HEK293T (cell line): ENCODE measurements at regions of chr6 and their contacts with region 1.

Region 1: DNA sequence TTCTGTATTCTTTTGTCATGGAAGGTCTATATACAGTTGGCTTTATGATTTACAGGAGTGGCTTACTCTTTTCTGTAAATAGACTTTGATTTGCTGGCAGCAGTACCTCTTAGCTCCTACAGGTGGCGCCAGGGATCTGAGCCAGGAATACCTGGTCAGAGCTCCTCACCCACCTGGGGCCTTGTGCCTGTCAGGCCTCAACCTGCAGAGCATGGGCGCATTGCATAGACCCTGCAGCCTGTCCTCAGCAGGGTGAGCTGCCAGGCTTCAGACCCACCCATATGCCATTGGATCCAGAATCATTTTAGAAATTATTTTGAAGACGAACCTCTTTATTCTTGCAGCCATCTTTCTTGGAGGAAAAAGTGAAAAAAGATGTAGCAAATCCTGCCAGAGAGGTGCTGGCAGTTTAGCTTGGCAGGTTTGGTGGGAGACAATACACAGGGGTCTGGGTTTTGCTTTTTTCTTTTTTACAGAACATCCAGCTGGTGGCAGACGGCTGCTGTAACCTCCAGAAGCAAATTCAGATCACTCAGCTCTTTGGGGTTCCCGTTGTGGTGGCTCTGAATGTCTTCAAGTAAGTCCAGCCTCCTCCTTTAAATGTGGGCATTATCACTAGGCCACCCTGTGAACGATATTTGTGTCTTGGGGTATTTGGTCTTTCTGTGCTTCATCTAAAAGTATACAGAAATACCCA is 149.1 kb downstream of the MTHFD1L start:
- DNase-seq: peak; percentile 77

Region 2: DNA sequence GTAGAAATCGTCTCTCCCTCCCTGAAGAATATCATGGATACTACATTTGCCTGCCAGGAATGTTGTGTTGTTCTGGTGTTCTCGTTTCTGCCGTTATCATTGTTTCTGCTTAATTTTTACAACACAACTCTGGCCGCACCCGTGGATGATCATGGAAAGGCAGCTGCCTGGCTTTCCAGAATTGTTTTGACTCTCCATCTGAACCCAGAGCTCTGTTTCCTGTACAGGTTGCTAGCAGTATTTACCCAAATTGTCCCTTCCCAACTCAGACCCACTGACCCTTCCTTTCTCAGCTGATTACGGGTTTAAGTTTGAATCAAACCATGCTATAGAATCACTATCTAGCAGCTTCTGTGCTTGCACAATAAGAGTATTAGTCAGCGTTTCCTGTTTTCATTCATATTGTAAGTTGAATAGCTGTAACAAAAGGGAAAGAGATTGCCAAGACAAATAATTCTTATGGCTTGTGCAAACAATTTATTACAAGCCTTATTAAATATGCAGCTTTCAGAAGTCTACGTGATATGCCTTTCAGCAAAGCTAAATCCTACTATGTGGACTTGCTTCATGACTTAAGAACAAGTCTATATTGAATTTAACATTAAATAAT is 10.0 kb before region 1 on chr6:
- CTCF ChIA-PET with region 1: interaction called, 14 read pairs
- POLR2A ChIA-PET with region 1: no interaction called
- DNase-seq: no peak

Region 3: DNA sequence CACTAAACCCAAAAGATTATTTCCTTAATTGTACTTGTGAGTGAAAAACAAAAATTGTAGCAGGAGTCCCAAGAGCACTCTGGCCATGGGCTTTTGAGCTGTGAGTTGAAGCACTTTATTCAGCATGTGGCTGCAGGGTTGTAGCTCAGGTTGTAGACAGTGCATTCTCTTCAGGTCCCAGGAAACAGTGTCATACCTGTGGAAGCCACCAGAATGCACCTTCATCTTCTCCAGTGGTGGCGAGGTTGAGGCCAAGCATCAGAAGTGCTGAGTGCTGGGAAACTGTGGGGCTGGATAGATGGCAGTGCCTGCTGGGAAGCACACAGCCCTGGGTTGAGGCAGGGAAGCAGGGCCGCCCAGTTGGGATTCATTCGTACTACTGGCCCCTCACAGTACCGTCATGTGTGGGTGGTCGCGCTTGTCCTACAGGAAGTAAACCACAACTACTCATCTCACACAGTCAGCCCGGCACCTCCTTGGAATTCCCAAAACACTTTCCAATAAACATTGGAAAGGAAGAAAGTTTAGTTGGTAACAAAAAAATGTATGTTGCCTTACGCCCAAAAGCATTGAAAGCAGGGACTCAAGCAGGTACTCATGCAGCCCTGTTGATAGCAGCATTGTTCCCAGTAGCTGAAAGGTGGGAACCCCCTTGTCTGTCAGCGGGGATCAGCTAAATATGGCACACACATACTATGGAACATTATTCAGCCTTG is 13.4 kb after region 1 on chr6:
- CTCF ChIA-PET with region 1: interaction called, 11 read pairs
- POLR2A ChIA-PET with region 1: no interaction called
- DNase-seq: no peak

Region 4: DNA sequence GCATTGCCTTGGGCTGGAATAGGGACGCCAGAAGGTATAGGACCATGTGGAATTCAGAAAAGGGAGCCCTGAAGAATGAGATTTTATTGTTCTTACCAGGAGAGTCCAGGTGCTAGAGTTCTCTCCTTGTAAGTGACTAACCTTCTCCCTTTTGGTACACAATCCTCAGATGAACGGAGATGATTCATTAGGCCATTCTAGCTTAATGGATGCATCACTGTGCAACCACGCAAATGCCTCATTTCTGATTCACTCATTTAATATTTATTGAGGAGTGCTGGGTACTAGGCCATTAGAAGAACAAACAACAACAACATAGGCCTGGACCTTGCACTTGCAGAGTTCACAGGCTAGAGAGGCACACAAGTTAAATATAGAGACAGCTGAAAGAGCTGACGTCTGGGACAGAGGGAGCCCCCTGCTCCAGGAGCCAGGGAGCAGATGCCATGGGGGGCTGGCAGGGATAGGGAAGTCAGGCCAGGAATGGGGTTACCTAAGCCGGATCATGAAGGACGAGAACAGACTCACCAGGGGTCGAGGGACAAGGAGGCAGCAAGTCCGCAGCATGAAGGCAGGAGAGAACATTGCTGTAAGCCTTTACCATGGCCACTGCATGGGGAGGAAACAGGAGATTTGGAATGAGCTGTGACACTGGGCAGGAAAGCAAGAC is 45.7 kb after region 1 on chr6:
- CTCF ChIA-PET with region 1: no interaction called
- POLR2A ChIA-PET with region 1: no interaction called
- DNase-seq: no peak

Region 5: DNA sequence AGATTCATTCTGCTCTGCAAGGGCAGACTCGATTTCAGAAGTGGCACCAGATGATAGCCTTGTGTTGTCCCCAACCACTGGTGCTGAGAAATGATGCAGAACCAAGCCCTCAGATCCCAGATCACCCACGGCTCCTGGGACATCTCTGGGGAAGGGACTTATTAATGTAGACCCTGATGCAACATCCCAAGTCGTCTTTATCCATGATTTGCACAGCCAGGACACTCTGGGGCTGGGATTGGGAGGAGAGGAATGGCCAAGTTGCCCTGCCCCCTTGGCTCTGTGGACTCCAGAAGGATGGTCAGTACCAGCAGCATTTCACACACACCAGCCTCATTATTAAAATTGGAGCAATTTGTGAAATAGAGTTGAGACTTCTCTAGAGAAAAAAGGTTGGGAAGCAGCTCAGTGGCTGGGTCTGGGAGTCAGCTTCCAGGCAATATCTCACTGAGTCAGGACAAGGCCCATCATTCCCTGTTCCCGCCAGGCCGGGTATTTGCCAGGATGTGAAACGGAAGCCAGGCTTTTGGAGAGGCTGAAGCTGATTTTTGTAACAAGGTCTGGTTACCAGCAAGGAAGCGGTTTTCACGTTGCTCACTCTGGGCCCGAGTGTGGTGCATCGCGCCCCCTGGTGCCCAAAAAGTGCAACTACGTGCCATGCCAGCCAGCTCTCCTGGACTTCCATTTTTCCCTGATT is 309.4 kb after region 1 on chr6:
- CTCF ChIA-PET with region 1: interaction called, 42 read pairs
- POLR2A ChIA-PET with region 1: no interaction called
- DNase-seq: peak; percentile 85

Region 6: GRCh38 chr6:151330134-151330696 is 315.7 kb after region 1 on chr6:
- CTCF ChIA-PET with region 1: interaction called, 42 read pairs
- POLR2A ChIA-PET with region 1: no interaction called
- DNase-seq: no peak